Panc1 (cell line): ENCODE measurements at regions of chr5 and their contacts with region 1.

Region 1: DNA sequence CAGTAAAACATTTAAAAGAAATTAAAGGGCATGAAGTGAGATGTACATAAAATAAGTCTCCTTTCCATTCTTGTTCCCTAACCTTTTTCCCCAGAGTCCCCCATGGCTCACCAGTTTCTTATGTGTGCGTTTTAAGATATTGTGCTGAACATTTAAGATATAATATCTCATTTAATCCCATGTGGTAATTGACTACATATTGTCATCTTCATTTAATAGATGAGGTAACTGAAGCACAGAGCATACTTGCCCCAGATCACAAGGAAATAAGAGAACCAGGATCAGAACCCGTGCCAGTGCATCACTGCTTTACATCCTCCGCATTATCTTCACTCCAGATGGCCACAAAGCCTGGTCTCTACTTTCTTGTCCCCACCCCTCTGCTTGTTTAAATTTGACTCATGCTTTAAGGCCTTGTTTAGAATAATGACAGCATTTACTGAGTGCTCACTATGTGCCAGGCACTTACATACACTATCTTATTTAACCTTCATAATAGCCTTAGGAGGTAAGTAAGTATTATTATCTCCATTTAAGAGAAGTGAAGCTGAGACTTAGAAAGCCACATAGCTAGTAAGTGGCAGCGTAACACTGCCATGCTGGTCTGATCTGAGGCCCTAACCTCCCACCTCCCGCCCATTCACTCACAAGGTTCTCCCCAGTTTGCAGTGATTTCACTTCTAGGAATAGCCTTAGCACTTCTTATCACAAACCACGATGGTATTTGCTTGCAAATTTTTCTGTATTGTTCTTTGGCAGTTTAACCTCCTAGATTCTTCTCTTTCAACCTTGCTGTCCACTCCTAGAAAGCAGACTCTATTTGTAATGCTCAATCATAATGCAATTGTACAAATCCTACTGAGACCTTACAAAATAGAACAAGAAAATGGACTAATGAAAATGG is 78.4 kb upstream of the IL6ST start:
- DNase-seq: no peak
- ATAC-seq: no peak
- H3K4me3 ChIP-seq: no peak overlapping the region
- H3K27ac ChIP-seq: no peak overlapping the region
- H3K4me1 ChIP-seq: no peaks in the 10 kb centered on the region
- H3K27me3 ChIP-seq: no peaks in the 10 kb centered on the region
- CTCF ChIP-seq: no peak

Region 2: GRCh38 chr5:56190497-56190896 is 117.4 kb after region 1 on chr5:
- CTCF ChIA-PET with region 1: interaction called, 11 read pairs
- POLR2A ChIA-PET with region 1: no interaction called
- in situ Hi-C with region 1: no loop called
- intact Hi-C with region 1: no loop called
- DNase-seq: no peak
- ATAC-seq: no peak
- H3K4me3 ChIP-seq: no peak overlapping the region
- H3K27ac ChIP-seq: no peak overlapping the region
- H3K4me1 ChIP-seq: no peaks in the 10 kb centered on the region
- H3K27me3 ChIP-seq: no peaks in the 10 kb centered on the region
- CTCF ChIP-seq: no peak